Caco-2 (cell line): ENCODE measurements at regions of chr15 and their contacts with region 1.

Region 1: GRCh38 chr15:23050708-23051107 is 11.3 kb upstream of the TUBGCP5 start:
- DNase-seq: no peak
- H3K4me3 ChIP-seq: no peak overlapping the region
- H3K4me3 Mint-ChIP-seq: no peak overlapping the region
- H3K27ac Mint-ChIP-seq: no peak overlapping the region
- H3K4me1 ChIP-seq: no peaks in the 10 kb centered on the region
- H3K4me1 Mint-ChIP-seq: peaks cover 4% of the 10 kb centered on the region
- H3K27me3 ChIP-seq: no peaks in the 10 kb centered on the region
- H3K27me3 Mint-ChIP-seq: peaks cover 11% of the 10 kb centered on the region
- CTCF ChIP-seq: no peak

Region 2: DNA sequence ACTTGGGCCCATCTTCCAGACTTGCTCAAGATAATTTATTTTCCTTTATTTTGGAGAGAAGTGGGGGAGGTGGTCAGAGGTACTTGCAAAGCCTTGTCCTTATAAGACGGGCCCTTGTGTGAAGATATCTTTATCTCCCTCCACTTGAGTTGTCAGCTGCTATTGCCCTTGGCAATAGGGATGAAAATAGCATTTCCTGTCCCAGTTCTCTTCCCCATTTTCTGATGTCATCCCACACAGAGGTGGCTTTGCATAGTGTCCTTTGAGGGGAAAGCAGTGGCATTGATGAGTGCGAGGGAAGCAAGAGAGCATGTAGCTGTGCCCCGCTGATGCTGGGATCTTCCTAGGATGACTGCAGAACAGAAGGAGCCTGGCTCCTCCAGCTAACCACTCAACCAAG is 30.6 kb after region 1 on chr15:
- CTCF ChIA-PET with region 1: no interaction called
- POLR2A ChIA-PET with region 1: no interaction called
- intact Hi-C with region 1: loop called (anchors 5 kb)
- DNase-seq: no peak
- H3K4me3 ChIP-seq: no peak overlapping the region
- H3K4me3 Mint-ChIP-seq: peak overlapping the region; percentile 26
- H3K27ac Mint-ChIP-seq: peak overlapping the region; percentile 78
- H3K4me1 ChIP-seq: peaks cover 24% of the 10 kb centered on the region
- H3K4me1 Mint-ChIP-seq: peaks cover 17% of the 10 kb centered on the region
- H3K27me3 ChIP-seq: no peaks in the 10 kb centered on the region
- H3K27me3 Mint-ChIP-seq: no peaks in the 10 kb centered on the region
- CTCF ChIP-seq: no peak